ENCODE measurements at regions of chr18 and their contacts with region 1.

Region 1: GRCh38 chr18:30532379-30532778 is 510.2 kb downstream of the DSC3 start:
- DNase-seq: no peak
- ATAC-seq: no peak
- H3K4me3 ChIP-seq: no peak overlapping the region
- H3K27ac ChIP-seq: no peak overlapping the region
- H3K4me1 ChIP-seq: no peaks in the 10 kb centered on the region
- H3K27me3 ChIP-seq: no peaks in the 10 kb centered on the region
- CTCF ChIP-seq: no peak

Region 2: DNA sequence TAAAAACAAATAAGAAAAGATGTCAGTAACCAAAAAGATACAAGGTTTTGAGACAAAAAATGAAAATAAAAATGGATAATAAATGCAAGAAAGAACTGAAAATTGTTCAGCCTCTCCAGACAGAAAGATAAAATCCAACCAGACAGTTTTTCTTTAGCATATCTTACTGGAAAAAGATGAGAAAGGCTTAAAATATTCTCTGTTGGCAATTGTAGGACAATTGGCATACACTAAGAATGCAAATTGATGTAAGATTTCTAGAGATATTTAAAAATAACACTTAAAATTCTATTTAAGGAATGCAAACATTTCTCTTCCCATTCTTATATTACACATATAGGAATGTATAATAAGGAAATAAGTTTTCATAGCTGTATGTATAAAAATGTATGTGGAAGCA is 80.4 kb before region 1 on chr18:
- intact Hi-C with region 1: no loop called
- DNase-seq: no peak
- ATAC-seq: no peak
- H3K4me3 ChIP-seq: no peak overlapping the region
- H3K27ac ChIP-seq: no peak overlapping the region
- H3K4me1 ChIP-seq: no peaks in the 10 kb centered on the region
- H3K27me3 ChIP-seq: no peaks in the 10 kb centered on the region
- CTCF ChIP-seq: no peak

Region 3: GRCh38 chr18:30652387-30652786 is 120.0 kb after region 1 on chr18:
- intact Hi-C with region 1: loop called in 1 of 10 experiments (anchors 5 kb)
- DNase-seq: no peak
- ATAC-seq: no peak
- H3K4me3 ChIP-seq: no peak overlapping the region
- H3K27ac ChIP-seq: no peak overlapping the region
- H3K4me1 ChIP-seq: no peaks in the 10 kb centered on the region
- H3K27me3 ChIP-seq: no peaks in the 10 kb centered on the region
- CTCF ChIP-seq: no peak